ENCODE measurements at regions of chr1 and their contacts with region 1.

Region 1: GRCh38 chr1:66242646-66243547 is 291.1 kb upstream of the SGIP1 start:
- DNase-seq: peak; percentile 80 to 98 (median 90)

Region 2: DNA sequence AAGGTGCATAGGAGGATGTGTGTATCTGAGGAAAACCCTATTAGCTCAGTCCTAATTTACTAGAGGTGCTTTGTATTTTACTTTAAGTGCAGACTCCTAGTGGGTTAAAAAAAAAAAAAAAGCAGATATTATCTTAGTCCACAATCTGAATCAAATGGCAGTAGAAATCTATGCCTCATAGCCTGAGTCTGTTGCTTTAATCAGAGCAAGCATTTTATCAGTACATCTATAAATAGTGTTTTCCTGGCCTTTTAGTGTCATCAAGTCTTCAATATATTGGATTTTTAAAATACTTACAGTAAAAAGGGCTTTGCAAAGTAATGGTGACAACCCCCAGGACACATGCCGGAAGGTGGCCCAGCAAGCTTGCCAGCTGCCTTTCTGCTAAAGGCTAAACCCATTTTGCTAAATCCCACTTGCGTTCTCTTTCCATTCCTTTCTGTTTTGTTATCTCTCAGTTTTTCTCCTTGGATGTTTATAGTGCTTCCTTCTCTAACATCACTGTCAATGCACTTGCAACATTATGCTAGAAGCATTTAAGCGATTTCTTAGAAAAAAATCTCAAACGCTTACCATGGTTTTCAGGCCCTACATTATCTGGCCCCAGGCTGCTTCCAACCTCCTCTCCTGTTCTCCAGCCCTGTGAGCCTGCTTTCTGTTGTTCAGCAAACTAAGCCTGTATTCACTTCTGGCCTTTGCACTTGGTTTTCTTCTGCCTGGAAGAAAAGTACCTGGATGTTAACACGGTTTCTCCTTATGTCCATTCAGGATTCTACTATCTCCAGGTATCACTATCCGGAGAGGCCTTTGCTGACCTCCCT is 243.9 kb before region 1 on chr1:
- intact Hi-C with region 1: loop called (anchors 5 kb)
- DNase-seq: peak in 1 of 10 donors; percentile 77

Region 3: DNA sequence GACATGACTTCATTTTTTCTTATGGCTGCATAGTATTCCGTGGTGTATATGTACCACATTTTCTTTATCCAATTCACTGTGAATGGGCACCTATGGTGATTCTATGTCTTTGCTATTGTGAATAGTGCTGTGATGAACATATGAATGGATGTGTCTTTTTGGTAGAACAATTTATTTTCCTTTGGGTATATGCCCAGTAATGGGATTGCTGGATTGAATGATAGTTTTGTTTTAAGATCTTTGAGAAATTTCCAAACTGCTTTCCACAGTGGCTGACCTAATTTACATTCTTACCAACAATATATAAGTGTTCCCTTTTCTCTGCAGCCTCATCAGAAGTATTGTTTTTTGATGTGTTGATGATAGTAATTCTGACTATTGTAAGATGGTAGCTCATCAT is 70.6 kb before region 1 on chr1:
- intact Hi-C with region 1: loop called (anchors 5 kb)
- DNase-seq: no peak

Region 4: GRCh38 chr1:66380452-66381212 is 137.7 kb after region 1 on chr1:
- intact Hi-C with region 1: no loop called
- DNase-seq: peak in 1 of 10 donors; percentile 57